ENCODE measurements at regions of chr10 and their contacts with region 1.

Region 1: DNA sequence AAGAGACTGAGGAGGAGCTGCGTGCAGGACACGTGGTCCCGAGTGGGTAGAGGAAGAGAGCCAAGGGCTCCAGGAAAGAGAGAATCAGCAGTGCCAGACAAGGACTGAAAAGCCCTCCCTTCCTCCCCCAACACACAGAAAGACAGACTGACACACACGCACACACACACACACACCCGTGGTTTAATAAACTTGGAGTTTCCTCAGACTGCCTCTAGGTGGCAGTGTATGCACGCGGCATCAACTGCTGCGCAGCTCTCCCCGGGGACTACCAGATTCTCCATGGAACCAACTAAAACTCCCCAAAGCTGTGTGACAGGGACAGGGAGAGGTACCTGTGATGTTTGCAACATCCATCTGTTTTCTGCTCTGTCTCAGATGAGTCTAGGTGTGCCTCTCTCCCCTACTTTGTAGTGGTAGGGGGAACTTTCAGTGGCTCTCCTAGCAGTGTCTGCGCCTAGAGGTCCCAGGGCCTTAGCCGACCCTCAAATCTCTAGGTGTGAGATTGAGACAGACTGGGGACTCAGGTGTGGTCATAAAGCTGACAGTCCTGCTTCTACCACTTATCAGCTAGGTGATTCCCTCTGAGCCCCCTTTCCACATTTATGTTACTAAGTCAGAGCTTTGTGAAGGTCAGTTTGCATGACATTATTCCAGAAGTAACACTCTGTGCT is 9.3 kb upstream of the TSPAN14 start:
- DNase-seq: peak; percentile 74
- ATAC-seq: peak; percentile 97
- H3K4me3 ChIP-seq: no peak overlapping the region
- H3K27ac ChIP-seq: no peak overlapping the region
- H3K4me1 ChIP-seq: no peaks in the 10 kb centered on the region
- H3K27me3 ChIP-seq: no peaks in the 10 kb centered on the region; the same call in 1 of the 2 replicates
- CTCF ChIP-seq: peak; percentile 95
- POLR2A ChIP-seq: no peak
- RAD21 ChIP-seq: peak; percentile 97

Region 2: GRCh38 chr10:80372675-80373074 is 72.1 kb before region 1 on chr10:
- CTCF ChIA-PET with region 1: no interaction called
- POLR2A ChIA-PET with region 1: no interaction called
- dilution Hi-C with region 1: no loop called
- in situ Hi-C with region 1: no loop called
- intact Hi-C with region 1: no loop called
- DNase-seq: no peak
- ATAC-seq: no peak
- H3K4me3 ChIP-seq: no peak overlapping the region
- H3K27ac ChIP-seq: no peak overlapping the region
- H3K4me1 ChIP-seq: no peaks in the 10 kb centered on the region
- H3K27me3 ChIP-seq: no peaks in the 10 kb centered on the region; the same call in 1 of the 2 replicates
- CTCF ChIP-seq: no peak
- POLR2A ChIP-seq: no peak
- RAD21 ChIP-seq: no peak

Region 3: GRCh38 chr10:80408242-80409101 is 36.3 kb before region 1 on chr10 and contains the start of gene PRXL2A:
- CTCF ChIA-PET with region 1: no interaction called
- POLR2A ChIA-PET with region 1: no interaction called
- dilution Hi-C with region 1: no loop called
- in situ Hi-C with region 1: no loop called
- intact Hi-C with region 1: no loop called
- DNase-seq: no peak
- ATAC-seq: peak; percentile 87
- H3K4me3 ChIP-seq: peak within 1 kb of the TSS; percentile 43
- H3K27ac ChIP-seq: no peak within 1 kb of the TSS
- H3K4me1 ChIP-seq: peaks cover 2% of the 10 kb centered on the region; the same call in 1 of the 2 replicates
- H3K27me3 ChIP-seq: peaks cover 18% of the 10 kb centered on the region
- CTCF ChIP-seq: no peak
- POLR2A ChIP-seq: no peak
- RAD21 ChIP-seq: no peak
- total RNA-seq, gene PRXL2A: 0.90 and 1.1 TPM in 2 replicates

Region 4: GRCh38 chr10:80504158-80504811 is 59.5 kb after region 1 on chr10:
- CTCF ChIA-PET with region 1: interaction called, 32 read pairs
- POLR2A ChIA-PET with region 1: no interaction called
- dilution Hi-C with region 1: no loop called
- in situ Hi-C with region 1: no loop called
- intact Hi-C with region 1: loop called (anchors 1 kb)
- DNase-seq: no peak
- ATAC-seq: no peak
- H3K4me3 ChIP-seq: no peak overlapping the region
- H3K27ac ChIP-seq: no peak overlapping the region
- H3K4me1 ChIP-seq: peaks cover 42% of the 10 kb centered on the region
- H3K27me3 ChIP-seq: no peaks in the 10 kb centered on the region
- CTCF ChIP-seq: no peak
- POLR2A ChIP-seq: no peak
- RAD21 ChIP-seq: no peak

Region 5: GRCh38 chr10:80662577-80663261 is 217.9 kb after region 1 on chr10:
- CTCF ChIA-PET with region 1: interaction called, 9 read pairs
- POLR2A ChIA-PET with region 1: no interaction called
- dilution Hi-C with region 1: no loop called
- in situ Hi-C with region 1: loop called (anchors 10 kb)
- intact Hi-C with region 1: loop called (anchors 2 kb)
- DNase-seq: peak; percentile 71
- ATAC-seq: peak; percentile 99
- H3K4me3 ChIP-seq: no peak overlapping the region; the same call in 1 of the 2 replicates
- H3K27ac ChIP-seq: no peak overlapping the region
- H3K4me1 ChIP-seq: no peaks in the 10 kb centered on the region
- H3K27me3 ChIP-seq: no peaks in the 10 kb centered on the region
- CTCF ChIP-seq: peak; percentile 77
- POLR2A ChIP-seq: no peak
- RAD21 ChIP-seq: peak; percentile 53

Region 6: DNA sequence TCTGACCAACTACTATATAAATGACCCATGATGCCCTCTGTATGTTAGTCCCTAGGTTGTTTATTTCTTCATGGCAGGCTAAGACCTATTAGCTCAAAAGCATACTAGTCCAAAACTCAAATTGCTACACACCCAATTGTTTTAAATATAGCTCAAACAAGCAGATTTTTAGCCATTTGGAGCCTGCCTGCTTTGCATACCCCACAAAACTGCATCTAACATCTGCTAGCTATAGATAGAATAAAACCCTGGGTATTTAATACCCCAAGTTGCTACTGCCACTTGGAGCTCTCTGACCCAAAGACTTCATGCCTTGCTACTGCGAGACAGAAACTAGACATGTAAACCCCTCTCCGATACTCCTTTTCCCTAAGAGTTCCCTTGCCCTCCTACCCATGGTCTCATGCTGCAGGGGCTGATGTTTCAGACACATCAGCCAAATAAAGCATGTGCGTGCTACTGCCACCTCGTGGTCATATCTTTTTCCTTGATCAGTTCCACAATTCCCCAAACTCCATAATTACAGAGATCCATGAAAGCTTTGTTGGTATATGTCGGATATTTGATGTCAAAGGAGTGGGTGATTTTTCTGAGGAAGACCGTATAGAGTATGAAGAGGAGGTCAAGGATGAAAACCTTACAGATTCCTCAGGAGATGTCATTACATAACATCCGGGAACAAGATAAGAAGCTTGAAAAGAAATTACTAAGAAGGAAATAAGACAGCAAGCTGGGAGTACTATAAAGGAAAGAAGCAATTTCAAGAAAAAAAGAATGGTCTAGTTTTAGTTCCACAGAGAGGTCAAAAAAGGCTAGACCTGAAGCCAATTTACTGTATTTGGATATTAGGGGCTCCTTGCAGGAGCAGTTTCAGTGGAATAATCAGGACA is 479.5 kb after region 1 on chr10:
- CTCF ChIA-PET with region 1: no interaction called
- POLR2A ChIA-PET with region 1: no interaction called
- dilution Hi-C with region 1: no loop called
- in situ Hi-C with region 1: loop called (anchors 25 kb)
- intact Hi-C with region 1: loop called (anchors 1 kb)
- DNase-seq: peak; percentile 11
- ATAC-seq: no peak
- H3K4me3 ChIP-seq: no peak overlapping the region
- H3K27ac ChIP-seq: no peak overlapping the region
- H3K4me1 ChIP-seq: no peaks in the 10 kb centered on the region
- H3K27me3 ChIP-seq: no peaks in the 10 kb centered on the region
- CTCF ChIP-seq: peak; percentile 50
- POLR2A ChIP-seq: no peak
- RAD21 ChIP-seq: peak; percentile 42

Measured in IMR-90 (cell line).